Activated CD8-positive, alpha-beta memory T cell treated with anti-CD3 and anti-CD28 coated beads, Interleukin-2, amount 10 ng/mL, durations not matched to agents 7 days and 5 days (primary cell): ENCODE measurements at regions of chr12 and their contacts with region 1.

Region 1: GRCh38 chr12:47935184-47935583 is 28.2 kb upstream of the TMEM106C start:
- DNase-seq: peak; percentile 37
- ATAC-seq: no peak
- H3K4me3 Mint-ChIP-seq: no peak overlapping the region
- H3K27ac Mint-ChIP-seq: no peak overlapping the region
- H3K4me1 Mint-ChIP-seq: no peaks in the 10 kb centered on the region
- H3K27me3 Mint-ChIP-seq: peaks cover 23% of the 10 kb centered on the region

Region 2: GRCh38 chr12:47858511-47859266 is 76.5 kb before region 1 on chr12:
- CTCF ChIA-PET with region 1: no interaction called
- DNase-seq: no peak
- ATAC-seq: no peak
- H3K4me3 Mint-ChIP-seq: no peak overlapping the region
- H3K27ac Mint-ChIP-seq: no peak overlapping the region
- H3K4me1 Mint-ChIP-seq: peaks cover 42% of the 10 kb centered on the region
- H3K27me3 Mint-ChIP-seq: no peaks in the 10 kb centered on the region

Region 3: DNA sequence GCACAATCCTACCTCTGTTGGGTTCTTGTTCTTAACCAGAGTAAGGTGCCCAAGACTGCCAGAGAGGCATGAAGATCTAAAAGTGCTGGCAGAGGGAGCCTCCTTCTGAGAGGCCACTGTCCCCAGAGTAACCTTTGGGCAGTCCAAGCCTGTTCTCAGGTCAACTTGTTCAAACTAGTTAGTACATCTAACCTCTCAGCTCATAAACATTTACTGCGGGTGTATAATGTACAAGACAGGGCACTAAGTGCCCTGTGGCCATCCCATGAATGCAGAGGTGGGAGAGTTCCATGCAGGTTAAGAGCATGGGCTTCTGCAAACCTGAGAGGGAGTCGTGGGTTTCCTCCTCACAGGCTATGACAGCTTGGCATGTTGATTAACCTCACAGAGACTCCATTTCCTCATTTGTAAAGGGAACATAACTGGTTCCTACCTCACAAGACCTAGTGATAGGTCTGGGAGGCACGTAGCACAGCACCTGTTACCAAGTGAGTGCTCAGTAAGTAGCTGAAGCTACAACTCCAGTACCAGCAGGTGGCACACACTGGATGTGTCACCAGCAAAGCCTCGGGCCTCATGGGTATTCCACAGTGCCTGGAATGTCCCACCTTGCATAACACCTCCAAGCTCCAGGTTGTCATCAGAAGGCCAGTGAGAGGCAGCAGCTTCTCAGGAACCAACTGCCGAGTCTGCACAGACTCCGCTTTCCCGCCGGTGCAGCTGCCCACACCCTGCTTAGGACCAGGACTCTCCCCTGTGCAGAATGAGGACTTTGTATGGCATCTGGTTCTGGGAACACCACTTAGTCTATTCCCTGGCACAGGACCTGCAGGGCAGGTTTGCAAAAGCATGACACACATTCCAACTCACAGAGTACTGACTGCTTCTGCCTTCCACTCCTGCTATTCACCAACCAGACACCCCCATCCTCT is 34.8 kb before region 1 on chr12:
- CTCF ChIA-PET with region 1: no interaction called
- DNase-seq: no peak
- ATAC-seq: no peak
- H3K4me3 Mint-ChIP-seq: no peak overlapping the region
- H3K27ac Mint-ChIP-seq: peak overlapping the region; percentile 9
- H3K4me1 Mint-ChIP-seq: peaks cover 80% of the 10 kb centered on the region
- H3K27me3 Mint-ChIP-seq: peaks cover under 1% of the 10 kb centered on the region

Region 4: GRCh38 chr12:47949441-47950308 is 14.5 kb after region 1 on chr12:
- CTCF ChIA-PET with region 1: interaction called, 10 read pairs
- DNase-seq: peak; percentile 60
- ATAC-seq: peak; percentile 76
- H3K4me3 Mint-ChIP-seq: no peak overlapping the region
- H3K27ac Mint-ChIP-seq: no peak overlapping the region
- H3K4me1 Mint-ChIP-seq: peaks cover 14% of the 10 kb centered on the region
- H3K27me3 Mint-ChIP-seq: peaks cover 8% of the 10 kb centered on the region